ENCODE measurements at regions of chr9 and their contacts with region 1.

Region 1: GRCh38 chr9:78235756-78236538 is at the start of gene CEP78:
- DNase-seq: peak; percentile 95
- H3K4me3 ChIP-seq: peak within 1 kb of the TSS; percentile 83
- H3K27ac ChIP-seq: peak within 1 kb of the TSS; percentile 56
- H3K4me1 ChIP-seq: peaks cover 33% of the 10 kb centered on the region
- CTCF ChIP-seq: no peak
- total RNA-seq, gene CEP78: 59.3 and 65.1 TPM in 2 replicates

Region 2: DNA sequence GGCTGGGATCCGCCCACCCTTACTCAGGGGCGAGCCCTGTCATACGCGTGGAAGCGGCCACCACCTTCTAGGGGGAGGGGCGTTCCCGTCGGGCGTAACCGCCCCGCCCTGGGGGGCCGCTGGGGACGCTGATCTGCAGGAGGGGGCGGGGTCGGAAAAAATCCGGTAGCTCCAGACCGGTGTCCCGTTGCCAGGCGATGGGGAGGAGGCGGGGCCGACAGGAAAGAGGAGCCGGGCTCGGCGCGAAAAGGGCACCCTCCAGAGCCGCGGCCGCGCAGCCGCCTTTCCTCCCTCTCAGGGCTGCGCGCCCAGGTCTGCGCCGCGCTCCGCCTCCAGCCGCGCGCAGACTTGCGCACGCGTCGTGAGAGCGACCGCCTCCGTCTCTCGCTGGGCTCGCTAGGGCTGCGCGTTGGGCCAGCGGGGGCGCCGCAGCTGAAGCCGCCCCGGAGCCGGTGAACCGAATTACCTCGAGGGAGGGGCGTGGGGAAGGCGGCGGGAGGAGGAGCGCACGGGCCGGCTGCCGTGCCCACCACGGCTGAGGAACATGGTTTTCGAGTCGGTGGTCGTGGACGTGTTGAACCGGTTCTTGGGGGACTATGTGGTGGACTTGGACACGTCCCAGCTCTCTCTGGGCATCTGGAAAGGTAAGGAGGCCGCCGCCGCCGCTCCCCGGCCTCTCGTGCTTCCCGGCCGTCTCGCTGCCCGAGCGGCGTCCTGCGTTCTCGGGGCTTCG is 1058.6 kb before region 1 on chr9 and contains the start of gene VPS13A:
- CTCF ChIA-PET with region 1: no interaction called
- POLR2A ChIA-PET with region 1: no interaction called
- intact Hi-C with region 1: loop called (anchors 10 kb)
- DNase-seq: peak; percentile 93
- H3K4me3 ChIP-seq: peak within 1 kb of the TSS; percentile 86
- H3K27ac ChIP-seq: peak within 1 kb of the TSS; percentile 58
- H3K4me1 ChIP-seq: peaks cover 27% of the 10 kb centered on the region
- CTCF ChIP-seq: peak; percentile 42; the same call in 1 of the 2 replicates
- total RNA-seq, gene VPS13A: 22.8 and 27.0 TPM in 2 replicates

Region 3: GRCh38 chr9:78130004-78130403 is 105.9 kb before region 1 on chr9:
- CTCF ChIA-PET with region 1: no interaction called
- POLR2A ChIA-PET with region 1: no interaction called
- intact Hi-C with region 1: loop called (anchors 5 kb)
- DNase-seq: peak; percentile 40
- H3K4me3 ChIP-seq: no peak overlapping the region
- H3K27ac ChIP-seq: no peak overlapping the region
- H3K4me1 ChIP-seq: peaks cover 19% of the 10 kb centered on the region
- CTCF ChIP-seq: peak; percentile 73

Region 4: GRCh38 chr9:78221425-78221824 is 14.5 kb before region 1 on chr9:
- CTCF ChIA-PET with region 1: interaction called, 5 read pairs
- POLR2A ChIA-PET with region 1: interaction called, 19 read pairs
- intact Hi-C with region 1: no loop called
- DNase-seq: no peak
- H3K4me3 ChIP-seq: no peak overlapping the region
- H3K27ac ChIP-seq: no peak overlapping the region
- H3K4me1 ChIP-seq: no peaks in the 10 kb centered on the region
- CTCF ChIP-seq: no peak

Region 5: GRCh38 chr9:78296893-78297671 is 61.1 kb after region 1 on chr9 and contains the start of gene PSAT1:
- CTCF ChIA-PET with region 1: no interaction called
- POLR2A ChIA-PET with region 1: interaction called, 18 read pairs
- intact Hi-C with region 1: loop called (anchors 1 kb)
- DNase-seq: peak; percentile 98
- H3K4me3 ChIP-seq: peak within 1 kb of the TSS; percentile 85
- H3K27ac ChIP-seq: peak within 1 kb of the TSS; percentile 84
- H3K4me1 ChIP-seq: peaks cover 22% of the 10 kb centered on the region
- CTCF ChIP-seq: peak; percentile 34; the same call in 1 of the 2 replicates
- total RNA-seq, gene PSAT1: 116 and 125 TPM in 2 replicates

Region 6: GRCh38 chr9:78552802-78553201 is 316.9 kb after region 1 on chr9:
- CTCF ChIA-PET with region 1: no interaction called
- POLR2A ChIA-PET with region 1: no interaction called
- intact Hi-C with region 1: no loop called
- DNase-seq: no peak
- H3K4me3 ChIP-seq: no peak overlapping the region
- H3K27ac ChIP-seq: no peak overlapping the region
- H3K4me1 ChIP-seq: no peaks in the 10 kb centered on the region
- CTCF ChIP-seq: no peak

Measured in OCI-LY7 (cell line).